Posterior vena cava (tissue), 2 donors: ENCODE measurements at regions of chr6 and their contacts with region 1.

Region 1: GRCh38 chr6:15915508-15916178 is 213.2 kb upstream of the MYLIP start:
- DNase-seq: no peak

Region 2: DNA sequence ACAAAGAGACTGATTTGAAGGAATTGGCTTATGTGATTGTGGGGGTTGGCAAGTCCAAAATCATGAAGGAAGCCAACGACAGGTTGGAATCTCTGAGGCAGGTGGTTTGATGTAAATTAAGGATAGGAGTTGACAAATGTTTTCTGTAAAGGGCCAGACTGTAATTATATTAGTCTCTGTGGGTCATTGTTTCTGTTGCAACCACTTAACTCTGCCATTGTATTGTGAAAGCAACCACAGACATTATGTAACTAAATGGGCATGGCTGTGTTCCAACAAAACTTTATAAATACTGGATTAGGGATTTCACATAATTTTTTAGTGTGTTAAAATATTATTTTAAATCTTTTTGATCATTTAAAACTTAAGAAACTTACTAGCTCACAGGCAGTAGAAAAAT is 14.0 kb after region 1 on chr6:
- intact Hi-C with region 1: loop called in 1 of 2 experiments (anchors 1 kb)
- DNase-seq: no peak